ENCODE measurements at regions of chr16 and their contacts with region 1.

Region 1: GRCh38 chr16:3400779-3401688 is at the starts of genes ZNF174 and ZSCAN32:
- DNase-seq: peak; percentile 100
- H3K4me3 ChIP-seq: peak within 1 kb of the TSS; percentile 66 to 87 (median 82)
- H3K27ac ChIP-seq: peak within 1 kb of the TSS; percentile 42
- H3K4me1 ChIP-seq: peaks cover 13% of the 10 kb centered on the region
- H3K27me3 ChIP-seq: no peaks in the 10 kb centered on the region
- CTCF ChIP-seq: peak in 1 of 2 donors; percentile 1
- POLR2A ChIP-seq: peak; percentile 94
- total RNA-seq, gene ZNF174: 7.4 and 9.1 TPM in 2 replicates
- total RNA-seq, gene ZSCAN32: 10.9 and 13.1 TPM in 2 replicates

Region 2: GRCh38 chr16:3282730-3283524 is 118.1 kb before region 1 on chr16 and contains the start of gene ZNF263:
- CTCF ChIA-PET with region 1: no interaction called
- POLR2A ChIA-PET with region 1: interaction called, 5 read pairs
- dilution Hi-C with region 1: no loop called
- intact Hi-C with region 1: loop called (anchors 1 kb)
- DNase-seq: peak; percentile 98
- H3K4me3 ChIP-seq: peak within 1 kb of the TSS; percentile 74 to 79 (median 77)
- H3K27ac ChIP-seq: peak within 1 kb of the TSS; percentile 92
- H3K4me1 ChIP-seq: peaks cover 13% of the 10 kb centered on the region
- H3K27me3 ChIP-seq: peaks cover 2 to 6% of the 10 kb centered on the region in 2 experiments
- CTCF ChIP-seq: no peak
- POLR2A ChIP-seq: peak; percentile 75
- total RNA-seq, gene ZNF263: 20.8 and 22.7 TPM in 2 replicates

Region 3: GRCh38 chr16:3305109-3306068 is 95.6 kb before region 1 on chr16 and contains the starts of genes TIGD7 and ZNF75A:
- CTCF ChIA-PET with region 1: no interaction called
- POLR2A ChIA-PET with region 1: no interaction called
- dilution Hi-C with region 1: no loop called
- intact Hi-C with region 1: loop called (anchors 2 kb)
- DNase-seq: peak; percentile 92
- H3K4me3 ChIP-seq: peak within 1 kb of the TSS; percentile 46 to 81 (median 65)
- H3K27ac ChIP-seq: peak within 1 kb of the TSS; percentile 86
- H3K4me1 ChIP-seq: peaks cover 12% of the 10 kb centered on the region
- H3K27me3 ChIP-seq: no peaks in the 10 kb centered on the region
- CTCF ChIP-seq: peak in 1 of 2 donors; percentile 5
- POLR2A ChIP-seq: peak; percentile 97
- total RNA-seq, gene TIGD7: 3.3 and 3.5 TPM in 2 replicates
- total RNA-seq, gene ZNF75A: 28.0 and 28.4 TPM in 2 replicates

Region 4: GRCh38 chr16:3364774-3365427 is 36.1 kb before region 1 on chr16:
- CTCF ChIA-PET with region 1: interaction called, 3 read pairs
- POLR2A ChIA-PET with region 1: interaction called, 3 read pairs
- dilution Hi-C with region 1: no loop called
- intact Hi-C with region 1: loop called (anchors 5 kb)
- DNase-seq: peak; percentile 95
- H3K4me3 ChIP-seq: peak overlapping the region; percentile 25 to 68 (median 57)
- H3K27ac ChIP-seq: peak overlapping the region; percentile 71
- H3K4me1 ChIP-seq: peaks cover 2% of the 10 kb centered on the region
- H3K27me3 ChIP-seq: no peaks in the 10 kb centered on the region
- CTCF ChIP-seq: no peak
- POLR2A ChIP-seq: peak; percentile 47

Region 5: DNA sequence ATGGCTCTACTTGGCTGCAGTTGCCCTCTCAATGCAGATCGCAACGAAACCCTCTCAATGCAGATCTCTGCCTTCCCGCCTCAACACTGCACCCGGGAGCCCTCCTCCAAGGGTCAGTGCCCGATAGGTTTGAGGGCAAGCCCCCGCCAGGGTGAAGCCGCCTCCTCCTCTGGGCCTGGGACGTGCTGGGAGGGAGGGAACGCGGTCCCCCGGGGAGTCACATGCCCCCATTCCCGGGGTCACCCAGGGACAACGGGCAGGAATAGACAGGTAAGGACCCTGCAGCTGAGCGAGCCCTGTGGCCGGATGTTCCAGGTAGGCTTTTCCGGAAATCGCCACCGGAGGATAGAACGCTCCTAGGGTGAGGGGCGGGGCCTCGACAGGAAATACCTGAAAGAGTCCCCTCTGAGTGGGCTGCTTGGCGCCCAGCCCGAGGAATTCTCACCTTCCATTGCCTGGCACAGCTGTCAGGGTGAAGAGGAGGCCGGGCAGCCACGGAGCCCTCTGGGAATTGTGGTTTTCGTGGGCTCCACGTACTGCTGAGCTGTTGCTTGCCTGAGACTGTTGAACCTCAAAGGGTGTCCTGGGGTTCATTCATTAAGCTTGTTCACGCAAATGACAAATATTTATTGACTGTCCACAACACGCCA is 12.8 kb after region 1 on chr16:
- CTCF ChIA-PET with region 1: interaction called, 14 read pairs
- POLR2A ChIA-PET with region 1: no interaction called
- dilution Hi-C with region 1: no loop called
- intact Hi-C with region 1: no loop called
- DNase-seq: no peak
- H3K4me3 ChIP-seq: no peak overlapping the region
- H3K27ac ChIP-seq: no peak overlapping the region
- H3K4me1 ChIP-seq: no peaks in the 10 kb centered on the region
- H3K27me3 ChIP-seq: no peaks in the 10 kb centered on the region
- CTCF ChIP-seq: no peak
- POLR2A ChIP-seq: no peak

Region 6: GRCh38 chr16:3443108-3444031 is 42.3 kb after region 1 on chr16 and contains the starts of genes NAA60 and ZNF597:
- CTCF ChIA-PET with region 1: no interaction called
- POLR2A ChIA-PET with region 1: interaction called, 5 read pairs
- dilution Hi-C with region 1: no loop called
- intact Hi-C with region 1: loop called (anchors 2 kb)
- DNase-seq: peak; percentile 90
- H3K4me3 ChIP-seq: peak within 1 kb of the TSS; percentile 57 to 78 (median 69)
- H3K27ac ChIP-seq: peak within 1 kb of the TSS; percentile 92
- H3K4me1 ChIP-seq: peaks cover 3% of the 10 kb centered on the region
- H3K27me3 ChIP-seq: no peaks in the 10 kb centered on the region
- CTCF ChIP-seq: no peak
- POLR2A ChIP-seq: no peak
- total RNA-seq, gene NAA60: 42.9 and 45.7 TPM in 2 replicates
- total RNA-seq, gene ZNF597: 1.4 and 1.9 TPM in 2 replicates

Region 7: GRCh38 chr16:3457434-3458252 is 56.6 kb after region 1 on chr16:
- CTCF ChIA-PET with region 1: interaction called, 4 read pairs
- POLR2A ChIA-PET with region 1: no interaction called
- dilution Hi-C with region 1: no loop called
- intact Hi-C with region 1: loop called (anchors 1 kb)
- DNase-seq: peak; percentile 88
- H3K4me3 ChIP-seq: peak overlapping the region; percentile 44 to 62 (median 47)
- H3K27ac ChIP-seq: peak overlapping the region; percentile 77
- H3K4me1 ChIP-seq: peaks cover 27% of the 10 kb centered on the region
- H3K27me3 ChIP-seq: no peaks in the 10 kb centered on the region
- CTCF ChIP-seq: peak; percentile 38 to 64
- POLR2A ChIP-seq: peak; percentile 77

Measured in endothelial cell of umbilical vein (primary cell).